Endothelial cell of umbilical vein (primary cell): ENCODE measurements at regions of chr11 and their contacts with region 1.

Region 1: DNA sequence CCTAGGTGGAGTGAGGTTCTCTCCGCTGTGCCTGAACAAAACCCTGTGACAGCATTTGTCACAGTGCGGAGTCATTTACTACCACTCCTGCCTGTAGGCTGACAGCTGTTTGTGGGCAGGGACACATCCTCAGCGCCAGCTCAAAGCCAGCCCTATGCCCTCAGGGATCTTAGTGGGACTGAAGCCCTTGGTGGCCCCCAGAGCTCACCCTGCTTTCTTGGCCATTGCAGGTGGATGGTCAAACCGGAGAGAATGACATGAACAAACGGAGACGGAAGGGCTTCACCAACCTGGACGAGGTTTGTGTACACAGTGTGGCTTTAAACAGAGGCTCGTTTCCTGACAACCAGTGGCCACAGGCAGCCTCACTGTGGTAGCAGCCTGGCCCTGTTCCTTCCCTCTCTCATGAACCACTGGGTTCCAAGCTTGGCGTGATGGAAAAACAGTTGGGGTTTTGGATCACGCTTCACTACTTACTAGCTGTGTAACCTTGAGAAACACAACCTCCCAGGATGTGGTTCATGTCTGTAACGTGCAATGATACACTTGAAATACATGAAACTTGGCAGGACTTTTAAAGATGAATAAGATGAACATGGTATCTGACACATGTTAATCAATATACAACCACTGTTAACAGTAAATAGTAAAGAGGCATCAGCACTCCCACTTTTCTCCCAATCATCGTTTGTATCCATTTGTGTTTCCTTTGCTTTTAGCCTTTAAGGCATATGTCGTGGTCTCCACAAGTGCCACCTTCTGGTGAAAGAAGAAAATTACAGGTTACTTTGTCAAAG is 125.8 kb downstream of the MICAL2 start:
- DNase-seq: peak; percentile 71
- H3K4me3 ChIP-seq: no peak overlapping the region
- H3K27ac ChIP-seq: peak overlapping the region; percentile 36
- H3K4me1 ChIP-seq: peaks cover 49% of the 10 kb centered on the region
- H3K27me3 ChIP-seq: no peaks in the 10 kb centered on the region
- CTCF ChIP-seq: peak; percentile 45 to 54
- POLR2A ChIP-seq: no peak

Region 2: GRCh38 chr11:11977206-11977938 is 258.8 kb before region 1 on chr11:
- CTCF ChIA-PET with region 1: no interaction called
- POLR2A ChIA-PET with region 1: no interaction called
- dilution Hi-C with region 1: no loop called
- intact Hi-C with region 1: loop called (anchors 5 kb)
- DNase-seq: peak; percentile 95
- H3K4me3 ChIP-seq: no peak overlapping the region
- H3K27ac ChIP-seq: peak overlapping the region; percentile 95
- H3K4me1 ChIP-seq: peaks cover 55% of the 10 kb centered on the region
- H3K27me3 ChIP-seq: no peaks in the 10 kb centered on the region
- CTCF ChIP-seq: no peak
- POLR2A ChIP-seq: peak; percentile 51

Region 3: DNA sequence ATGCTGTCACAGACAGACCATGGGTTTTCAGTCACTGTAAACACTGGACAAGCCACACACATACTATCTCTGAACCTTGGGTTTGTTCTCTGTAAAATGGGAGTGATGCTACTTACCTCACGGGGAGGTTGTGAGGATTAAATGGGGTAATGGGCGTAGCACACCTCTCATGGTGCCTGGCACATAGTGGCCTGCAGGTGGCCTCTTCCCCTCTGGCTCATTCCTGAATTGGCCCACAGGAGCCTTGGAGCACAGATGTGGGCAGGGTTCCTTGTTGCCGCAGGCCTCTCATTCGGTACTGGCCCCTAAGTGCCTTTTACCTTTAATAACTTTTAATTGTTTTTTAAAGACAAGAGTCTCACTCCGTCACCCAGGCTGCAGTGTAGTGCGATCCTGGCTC is 114.1 kb before region 1 on chr11:
- CTCF ChIA-PET with region 1: interaction called, 33 read pairs
- POLR2A ChIA-PET with region 1: no interaction called
- dilution Hi-C with region 1: no loop called
- intact Hi-C with region 1: loop called (anchors 1 kb)
- DNase-seq: no peak
- H3K4me3 ChIP-seq: no peak overlapping the region
- H3K27ac ChIP-seq: no peak overlapping the region
- H3K4me1 ChIP-seq: peaks cover 38% of the 10 kb centered on the region
- H3K27me3 ChIP-seq: no peaks in the 10 kb centered on the region
- CTCF ChIP-seq: peak; percentile 43 to 56
- POLR2A ChIP-seq: no peak

Region 4: GRCh38 chr11:12182676-12183541 is 53.2 kb before region 1 on chr11:
- CTCF ChIA-PET with region 1: interaction called, 5 read pairs
- POLR2A ChIA-PET with region 1: interaction called, 6 read pairs
- dilution Hi-C with region 1: no loop called
- intact Hi-C with region 1: loop called (anchors 1 kb)
- DNase-seq: peak; percentile 89
- H3K4me3 ChIP-seq: no peak overlapping the region
- H3K27ac ChIP-seq: peak overlapping the region; percentile 99
- H3K4me1 ChIP-seq: peaks cover 54% of the 10 kb centered on the region
- H3K27me3 ChIP-seq: no peaks in the 10 kb centered on the region
- CTCF ChIP-seq: no peak
- POLR2A ChIP-seq: no peak

Region 5: DNA sequence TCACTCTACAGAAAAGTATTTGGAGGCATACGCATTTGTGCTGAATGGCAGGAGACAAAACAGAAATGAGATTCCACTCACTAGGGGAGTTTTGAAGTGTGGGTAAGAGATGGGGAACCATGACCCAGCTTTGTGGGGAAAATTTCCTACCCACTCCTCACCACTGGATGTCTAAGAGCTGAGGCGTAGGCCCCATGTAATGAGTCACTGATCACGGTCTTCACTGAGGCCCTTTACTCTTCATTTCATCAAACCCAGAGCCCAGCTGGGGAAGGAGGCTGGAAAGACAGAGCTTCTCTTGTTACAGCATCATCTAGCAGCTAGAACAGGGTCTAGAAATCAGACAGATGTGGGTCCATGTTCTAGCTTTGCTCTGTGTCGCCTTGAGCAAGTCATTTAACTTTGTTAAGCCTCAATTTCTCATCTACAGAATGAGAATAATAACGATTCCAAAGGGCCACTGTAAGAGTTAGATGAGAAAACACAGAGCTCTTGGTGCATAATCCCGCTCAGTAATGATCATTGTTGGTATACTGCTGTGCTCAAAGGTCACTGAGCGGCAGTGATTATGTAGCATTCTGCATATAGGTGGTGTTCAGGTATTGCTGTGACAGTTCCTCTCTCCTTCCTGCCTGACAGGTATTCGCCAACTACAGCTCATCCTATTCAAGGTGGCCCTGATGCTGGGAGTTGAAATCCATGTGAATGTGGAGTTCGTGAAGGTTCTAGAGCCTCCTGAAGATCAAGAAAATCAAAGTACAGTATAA is 28.6 kb before region 1 on chr11:
- CTCF ChIA-PET with region 1: interaction called, 11 read pairs
- POLR2A ChIA-PET with region 1: no interaction called
- dilution Hi-C with region 1: no loop called
- intact Hi-C with region 1: no loop called
- DNase-seq: no peak
- H3K4me3 ChIP-seq: no peak overlapping the region
- H3K27ac ChIP-seq: no peak overlapping the region
- H3K4me1 ChIP-seq: no peaks in the 10 kb centered on the region
- H3K27me3 ChIP-seq: no peaks in the 10 kb centered on the region
- CTCF ChIP-seq: no peak
- POLR2A ChIP-seq: no peak